ENCODE measurements at regions of chr9 and their contacts with region 1.

Region 1: GRCh38 chr9:3467593-3468219 is 58.1 kb downstream of the RFX3 start:
- DNase-seq: peak; percentile 46 to 74
- ATAC-seq: peak; percentile 90 to 97 (median 94)
- H3K4me3 ChIP-seq: no peak overlapping the region
- H3K27ac ChIP-seq: no peak overlapping the region
- H3K4me1 ChIP-seq: peaks cover 18% of the 10 kb centered on the region
- H3K27me3 ChIP-seq: no peaks in the 10 kb centered on the region
- CTCF ChIP-seq: peak; percentile 88

Region 2: DNA sequence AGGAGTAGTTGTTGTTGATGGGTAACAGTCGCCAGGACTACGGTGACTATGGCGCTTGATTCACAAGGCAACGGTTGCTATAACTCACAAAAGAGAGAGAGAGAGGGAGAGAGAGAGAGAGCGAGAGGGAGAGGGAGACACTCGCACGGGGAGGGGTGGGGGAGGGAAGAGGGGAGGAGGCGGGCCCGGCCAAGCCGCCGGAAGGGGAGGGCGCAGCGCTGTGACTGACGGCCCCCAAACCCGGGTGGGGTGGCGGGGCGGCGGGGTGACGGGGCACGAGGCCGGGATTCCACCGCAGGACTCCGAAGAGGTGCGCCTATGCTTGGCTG is 58.1 kb after region 1 on chr9 and contains the start of gene RFX3:
- intact Hi-C with region 1: loop called in 1 of 2 experiments (anchors 5 kb)
- DNase-seq: peak; percentile 92 to 97
- ATAC-seq: peak; percentile 88 to 94 (median 90)
- H3K4me3 ChIP-seq: peak within 1 kb of the TSS; percentile 80
- H3K27ac ChIP-seq: peak within 1 kb of the TSS; percentile 99
- H3K4me1 ChIP-seq: peaks cover 34% of the 10 kb centered on the region
- H3K27me3 ChIP-seq: no peaks in the 10 kb centered on the region
- CTCF ChIP-seq: no peak
- total RNA-seq, gene RFX3: 2.8 to 5.7 (median 5.3) TPM

Region 3: GRCh38 chr9:3650994-3651622 is 183.4 kb after region 1 on chr9:
- intact Hi-C with region 1: loop called (anchors 10 kb)
- DNase-seq: no peak
- ATAC-seq: no peak
- H3K4me3 ChIP-seq: no peak overlapping the region
- H3K27ac ChIP-seq: no peak overlapping the region
- H3K4me1 ChIP-seq: no peaks in the 10 kb centered on the region
- H3K27me3 ChIP-seq: no peaks in the 10 kb centered on the region
- CTCF ChIP-seq: no peak

Measured in psoas muscle (tissue), 8 donors.